ENCODE measurements at regions of chr16 and their contacts with region 1.

Region 1: GRCh38 chr16:3400779-3401688 is at the starts of genes ZNF174 and ZSCAN32:
- DNase-seq: peak; percentile 99
- ATAC-seq: peak; percentile 99
- H3K4me3 Mint-ChIP-seq: peak within 1 kb of the TSS; percentile 88
- H3K27ac Mint-ChIP-seq: peak within 1 kb of the TSS; percentile 89
- H3K4me1 Mint-ChIP-seq: peaks cover 36% of the 10 kb centered on the region
- H3K27me3 Mint-ChIP-seq: no peaks in the 10 kb centered on the region
- total RNA-seq, gene ZNF174: 10.4 to 12.3 TPM
- total RNA-seq, gene ZSCAN32: 15.9 to 19.0 TPM

Region 2: DNA sequence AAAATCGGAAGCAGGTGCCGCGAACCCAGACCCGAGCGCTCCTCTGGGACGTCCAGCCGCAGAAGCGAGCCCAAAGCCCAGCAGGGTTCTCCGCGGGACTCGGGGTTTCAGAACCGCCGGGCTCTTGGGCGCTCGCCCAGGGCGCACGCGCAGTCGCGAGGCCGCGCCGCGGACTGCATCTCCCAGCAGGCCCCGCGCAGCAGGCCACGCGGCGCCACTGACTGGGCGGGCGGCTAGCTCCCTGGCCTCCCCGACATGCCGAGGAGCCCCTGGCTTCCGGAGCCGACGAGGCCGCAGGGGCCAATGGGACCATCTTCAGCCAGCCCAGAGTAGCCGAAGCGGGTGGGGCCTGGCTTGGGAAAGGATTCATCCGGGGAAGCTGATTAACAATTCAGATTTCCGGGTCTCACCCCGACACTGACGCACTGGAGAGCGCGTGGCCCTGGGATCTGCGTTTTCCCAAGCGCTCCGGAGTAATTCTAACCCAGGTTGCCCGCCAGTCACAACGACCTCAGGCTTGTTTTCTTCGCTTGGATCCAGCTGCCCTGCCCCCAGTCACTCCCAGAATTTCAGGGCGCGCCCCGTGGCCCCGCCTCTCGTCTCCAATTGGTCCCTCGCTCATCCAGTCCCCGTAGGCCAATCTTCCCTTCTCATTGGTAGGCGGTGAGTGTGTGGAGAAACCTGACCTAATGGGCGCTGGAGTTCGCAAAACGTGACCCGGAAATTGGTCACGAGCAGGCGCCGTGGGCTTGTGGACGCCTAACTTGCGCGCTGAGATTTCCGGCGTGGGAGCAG is 118.1 kb before region 1 on chr16 and contains the start of gene ZNF263:
- CTCF ChIA-PET with region 1: no interaction called
- POLR2A ChIA-PET with region 1: interaction called, 24 read pairs
- DNase-seq: peak; percentile 95
- ATAC-seq: peak; percentile 90
- H3K4me3 Mint-ChIP-seq: peak within 1 kb of the TSS; percentile 88
- H3K27ac Mint-ChIP-seq: peak within 1 kb of the TSS; percentile 97
- H3K4me1 Mint-ChIP-seq: peaks cover 40% of the 10 kb centered on the region
- H3K27me3 Mint-ChIP-seq: no peaks in the 10 kb centered on the region
- total RNA-seq, gene ZNF263: 24.3 to 25.0 TPM

Region 3: GRCh38 chr16:3364774-3365427 is 36.1 kb before region 1 on chr16:
- CTCF ChIA-PET with region 1: interaction called, 4 read pairs
- POLR2A ChIA-PET with region 1: interaction called, 18 read pairs
- DNase-seq: peak; percentile 94
- ATAC-seq: peak; percentile 96
- H3K4me3 Mint-ChIP-seq: peak overlapping the region; percentile 77
- H3K27ac Mint-ChIP-seq: peak overlapping the region; percentile 93
- H3K4me1 Mint-ChIP-seq: peaks cover 18% of the 10 kb centered on the region
- H3K27me3 Mint-ChIP-seq: peaks cover 7% of the 10 kb centered on the region

Region 4: DNA sequence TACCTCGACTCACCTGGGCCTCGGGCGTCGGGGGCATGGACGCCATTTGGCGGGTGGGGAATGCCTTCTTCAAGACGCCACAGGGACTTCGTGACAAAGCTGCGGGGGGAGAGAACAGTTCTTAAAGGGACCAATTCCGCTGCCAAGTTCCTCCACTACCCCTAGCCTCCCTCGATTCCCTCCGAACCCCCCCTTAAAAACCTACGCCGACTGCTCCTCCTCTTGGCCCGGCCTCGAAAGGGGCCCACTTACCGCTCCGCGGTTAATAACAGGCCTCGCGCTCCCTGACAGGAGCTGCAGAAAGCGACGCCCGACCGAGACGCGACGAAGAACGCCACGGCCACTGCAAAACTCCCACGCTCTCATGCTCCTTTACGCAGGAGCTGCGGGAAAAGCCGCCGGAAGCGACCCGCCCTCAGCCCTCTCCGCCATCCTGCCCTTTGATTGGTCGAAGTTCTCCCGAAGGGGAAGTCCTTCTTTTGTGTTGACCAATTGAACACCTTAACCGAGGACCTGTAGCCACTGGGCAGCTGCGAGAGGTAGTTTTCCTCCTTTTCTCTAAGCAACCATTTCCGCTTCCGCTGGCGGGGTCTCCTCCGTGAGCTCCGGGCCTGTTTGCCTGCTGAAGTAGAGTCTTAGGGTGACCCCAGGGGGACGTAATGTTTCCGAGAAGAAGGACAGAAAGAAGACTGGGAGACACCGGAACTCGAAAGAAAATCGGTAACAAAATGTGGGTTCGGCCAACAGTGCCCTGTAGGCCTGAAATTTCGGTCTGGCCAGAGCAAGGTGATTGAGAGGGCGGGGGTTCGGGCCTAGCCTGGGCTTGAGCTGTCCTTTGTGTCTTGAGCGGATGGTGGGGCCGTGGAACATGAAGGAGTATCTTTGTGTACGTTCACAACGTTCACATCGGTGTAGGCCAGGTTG is 42.3 kb after region 1 on chr16 and contains the starts of genes NAA60 and ZNF597:
- CTCF ChIA-PET with region 1: interaction called, 4 read pairs
- POLR2A ChIA-PET with region 1: interaction called, 26 read pairs
- DNase-seq: peak; percentile 87
- ATAC-seq: peak; percentile 94
- H3K4me3 Mint-ChIP-seq: peak within 1 kb of the TSS; percentile 95
- H3K27ac Mint-ChIP-seq: peak within 1 kb of the TSS; percentile 96
- H3K4me1 Mint-ChIP-seq: peaks cover 22% of the 10 kb centered on the region
- H3K27me3 Mint-ChIP-seq: no peaks in the 10 kb centered on the region
- total RNA-seq, gene NAA60: 46.3 to 49.0 TPM
- total RNA-seq, gene ZNF597: 2.4 to 2.7 TPM

Region 5: DNA sequence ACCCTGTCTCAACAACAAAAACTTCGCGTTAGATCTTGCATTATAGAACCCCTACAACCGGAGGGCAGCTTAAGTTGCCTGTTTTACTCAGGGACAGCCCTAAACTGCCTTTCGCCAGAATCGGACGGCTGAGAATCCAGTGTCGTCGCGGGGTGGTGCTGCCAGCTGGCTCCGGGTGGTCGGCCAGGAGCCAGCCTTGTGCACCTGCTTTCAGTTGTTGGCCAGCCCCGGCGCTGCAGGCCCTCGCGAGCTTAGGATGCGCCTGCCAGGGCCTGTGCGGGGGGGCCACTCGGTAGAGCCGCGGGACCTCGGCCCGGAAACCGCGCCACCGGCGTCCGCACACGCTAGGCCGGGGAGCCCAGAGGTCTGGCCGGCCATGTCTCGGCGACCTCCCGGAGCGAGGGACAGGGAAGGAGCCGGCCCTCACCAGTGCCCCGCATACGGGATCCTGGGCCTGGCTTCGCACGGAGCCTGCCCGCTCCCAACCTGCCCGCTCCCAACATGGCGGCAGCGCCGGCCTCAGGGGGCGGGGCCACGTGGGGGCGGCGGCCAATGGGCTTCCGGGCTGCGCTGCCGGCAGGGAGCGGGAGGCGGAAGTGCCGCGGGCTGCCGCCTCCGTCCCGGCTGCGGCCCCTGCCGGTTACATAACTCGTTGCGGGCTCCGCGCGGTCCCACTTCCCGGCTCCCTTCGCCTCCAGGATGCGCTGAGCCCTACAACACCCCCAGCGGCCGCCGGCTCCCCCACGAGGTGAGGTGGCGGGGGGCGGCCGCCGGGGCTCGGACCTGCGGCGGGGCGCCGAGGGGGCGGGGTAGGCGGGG is 56.6 kb after region 1 on chr16:
- CTCF ChIA-PET with region 1: interaction called, 5 read pairs
- POLR2A ChIA-PET with region 1: interaction called, 14 read pairs
- DNase-seq: peak; percentile 89
- ATAC-seq: peak; percentile 89
- H3K4me3 Mint-ChIP-seq: peak overlapping the region; percentile 80
- H3K27ac Mint-ChIP-seq: peak overlapping the region; percentile 87
- H3K4me1 Mint-ChIP-seq: peaks cover 48% of the 10 kb centered on the region
- H3K27me3 Mint-ChIP-seq: no peaks in the 10 kb centered on the region

Region 6: DNA sequence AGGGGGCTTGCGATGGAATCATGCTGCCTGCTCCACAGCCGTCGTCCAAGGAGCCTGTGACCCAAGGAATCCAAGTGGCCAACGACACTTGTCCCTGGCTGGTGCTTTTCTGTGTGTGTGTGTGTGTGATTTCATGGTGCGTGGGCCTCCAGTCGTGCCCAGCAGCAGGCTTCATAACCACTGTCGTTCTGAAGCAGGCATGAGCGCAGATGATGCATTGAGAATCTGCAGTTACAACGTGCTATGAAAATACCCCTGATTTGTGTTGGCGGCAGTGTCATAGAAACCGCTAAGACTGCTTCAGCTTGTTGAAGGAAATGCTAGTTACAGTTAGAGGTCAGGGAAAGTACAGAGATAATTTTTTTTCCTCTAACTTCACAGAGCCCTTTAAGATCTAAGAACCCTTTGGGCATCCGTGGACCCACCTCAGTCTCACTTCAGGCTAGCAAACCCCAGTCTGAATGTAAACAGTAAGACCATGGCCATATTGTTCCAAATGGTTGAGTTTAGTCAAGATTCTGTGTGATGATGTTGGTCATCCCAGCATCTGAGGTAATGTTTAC is 78.7 kb after region 1 on chr16:
- CTCF ChIA-PET with region 1: no interaction called
- POLR2A ChIA-PET with region 1: no interaction called
- DNase-seq: no peak
- ATAC-seq: no peak
- H3K4me3 Mint-ChIP-seq: no peak overlapping the region
- H3K27ac Mint-ChIP-seq: no peak overlapping the region
- H3K4me1 Mint-ChIP-seq: peaks cover 6% of the 10 kb centered on the region
- H3K27me3 Mint-ChIP-seq: no peaks in the 10 kb centered on the region

Region 7: GRCh38 chr16:4097811-4098240 is 696.8 kb after region 1 on chr16:
- CTCF ChIA-PET with region 1: no interaction called
- POLR2A ChIA-PET with region 1: no interaction called
- DNase-seq: no peak
- ATAC-seq: no peak
- H3K4me3 Mint-ChIP-seq: no peak overlapping the region
- H3K27ac Mint-ChIP-seq: no peak overlapping the region
- H3K4me1 Mint-ChIP-seq: no peaks in the 10 kb centered on the region
- H3K27me3 Mint-ChIP-seq: no peaks in the 10 kb centered on the region